Dorsolateral prefrontal cortex (tissue), 120 donors: ENCODE measurements at regions of chr14 and their contacts with region 1.

Region 1: GRCh38 chr14:24806061-24806678 is 172.2 kb upstream of the GZMB start:
- DNase-seq: peak; percentile 6 to 84 (median 65)
- H3K4me3 ChIP-seq: no peak overlapping the region
- H3K27ac ChIP-seq: peak overlapping the region in 2 of 59 donors; percentile 1 to 9
- H3K27me3 ChIP-seq: no peaks in the 10 kb centered on the region
- CTCF ChIP-seq: peak; percentile 54 to 92 (median 81)

Region 2: GRCh38 chr14:24411443-24412389 is 394.5 kb before region 1 on chr14:
- intact Hi-C with region 1: no loop called
- DNase-seq: peak in 1 of 10 donors; percentile 43
- H3K4me3 ChIP-seq: no peak overlapping the region
- H3K27ac ChIP-seq: no peak overlapping the region
- H3K27me3 ChIP-seq: peaks cover 0 to 5% (median 0%) of the 10 kb centered on the region in 45 donors
- CTCF ChIP-seq: peak in 50 of 56 donors; percentile 11 to 64 (median 43)

Region 3: DNA sequence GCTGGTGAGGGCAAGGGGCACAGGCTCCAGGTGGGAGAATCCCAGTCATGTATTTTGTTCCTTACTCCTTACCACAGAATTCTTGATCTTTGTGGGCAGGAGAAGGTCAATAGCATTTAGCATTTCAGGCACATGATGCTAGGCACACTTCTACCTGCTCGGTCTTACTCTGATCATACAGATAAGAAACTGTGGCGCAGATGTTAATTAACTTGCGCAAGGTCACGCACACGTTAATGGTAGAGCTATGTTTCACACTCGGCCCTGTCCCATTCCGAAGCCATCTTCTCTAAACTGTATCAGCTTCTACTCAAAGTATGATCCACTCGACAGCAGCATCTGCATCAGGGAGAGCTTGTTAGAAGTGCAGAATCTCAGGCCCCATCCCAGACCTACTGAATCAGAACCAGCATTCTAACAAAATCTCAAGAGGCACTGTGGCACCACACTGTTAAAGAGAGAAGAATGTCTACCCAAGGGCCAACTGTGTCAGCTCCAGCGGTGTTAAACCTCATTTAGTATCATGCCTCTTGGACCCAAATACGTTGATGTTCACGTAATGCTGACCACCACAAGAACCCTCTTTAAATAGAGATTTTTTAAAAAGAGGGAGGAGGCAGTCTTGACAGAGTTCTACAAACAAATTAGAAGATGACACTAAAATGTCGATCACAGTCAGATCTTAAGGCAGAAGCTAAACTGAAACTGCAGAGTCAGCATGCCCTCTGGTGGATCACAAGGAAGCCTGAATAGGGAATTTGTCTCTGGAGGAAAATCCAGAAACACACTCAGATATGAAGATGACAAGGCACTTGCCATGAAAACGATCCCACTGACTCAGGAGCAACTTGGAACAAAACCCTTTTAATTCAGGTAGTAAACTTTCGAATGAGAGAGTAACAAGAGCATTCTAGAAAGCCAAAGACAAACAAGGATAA is 236.5 kb after region 1 on chr14:
- intact Hi-C with region 1: loop called in 1 of 2 experiments (anchors 5 kb)
- DNase-seq: peak in 3 of 10 donors; percentile 34 to 51 (median 40)
- H3K4me3 ChIP-seq: peak overlapping the region in 34 of 59 donors; percentile 2 to 46 (median 26)
- H3K27ac ChIP-seq: peak overlapping the region in 23 of 59 donors; percentile 2 to 65 (median 21)
- H3K27me3 ChIP-seq: no peaks in the 10 kb centered on the region
- CTCF ChIP-seq: peak in 55 of 56 donors; percentile 51 to 87 (median 72)

Region 4: GRCh38 chr14:25132732-25133422 is 326.7 kb after region 1 on chr14:
- intact Hi-C with region 1: loop called (anchors 5 kb)
- DNase-seq: peak; percentile 13 to 79 (median 68)
- H3K4me3 ChIP-seq: peak overlapping the region in 45 of 59 donors; percentile 7 to 62 (median 36)
- H3K27ac ChIP-seq: peak overlapping the region in 3 of 59 donors; percentile 20 to 38 (median 32)
- H3K27me3 ChIP-seq: peaks cover 0 to 9% (median 0%) of the 10 kb centered on the region in 45 donors
- CTCF ChIP-seq: peak; percentile 76 to 96 (median 90)

Region 5: DNA sequence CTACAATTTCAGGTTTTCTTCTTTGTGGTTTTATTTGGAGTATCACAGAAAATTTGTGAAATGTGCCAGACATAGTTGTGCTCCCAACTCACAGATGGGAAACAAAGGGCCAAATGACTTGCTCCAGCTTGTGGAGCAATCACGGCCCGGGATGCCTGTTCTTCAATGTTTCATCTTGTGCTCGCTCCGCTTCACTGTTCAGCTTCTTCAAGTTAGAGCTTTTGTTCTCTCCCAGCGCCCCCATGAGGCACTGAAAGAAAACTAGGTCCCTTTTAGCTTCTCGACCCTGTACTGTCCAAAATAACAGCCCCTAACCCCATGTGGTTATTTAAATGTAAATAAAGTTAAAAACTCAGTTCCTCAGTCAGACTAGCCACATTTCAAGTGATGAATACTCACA is 431.7 kb after region 1 on chr14:
- intact Hi-C with region 1: loop called in 1 of 2 experiments (anchors 10 kb)
- DNase-seq: peak in 1 of 10 donors; percentile 40
- H3K4me3 ChIP-seq: no peak overlapping the region
- H3K27ac ChIP-seq: no peak overlapping the region
- H3K27me3 ChIP-seq: peaks cover 0 to 5% (median 0%) of the 10 kb centered on the region in 45 donors
- CTCF ChIP-seq: peak in 40 of 56 donors; percentile 13 to 61 (median 36)